AG04449 (cell line): ENCODE measurements at regions of chr10 and their contacts with region 1.

Region 1: DNA sequence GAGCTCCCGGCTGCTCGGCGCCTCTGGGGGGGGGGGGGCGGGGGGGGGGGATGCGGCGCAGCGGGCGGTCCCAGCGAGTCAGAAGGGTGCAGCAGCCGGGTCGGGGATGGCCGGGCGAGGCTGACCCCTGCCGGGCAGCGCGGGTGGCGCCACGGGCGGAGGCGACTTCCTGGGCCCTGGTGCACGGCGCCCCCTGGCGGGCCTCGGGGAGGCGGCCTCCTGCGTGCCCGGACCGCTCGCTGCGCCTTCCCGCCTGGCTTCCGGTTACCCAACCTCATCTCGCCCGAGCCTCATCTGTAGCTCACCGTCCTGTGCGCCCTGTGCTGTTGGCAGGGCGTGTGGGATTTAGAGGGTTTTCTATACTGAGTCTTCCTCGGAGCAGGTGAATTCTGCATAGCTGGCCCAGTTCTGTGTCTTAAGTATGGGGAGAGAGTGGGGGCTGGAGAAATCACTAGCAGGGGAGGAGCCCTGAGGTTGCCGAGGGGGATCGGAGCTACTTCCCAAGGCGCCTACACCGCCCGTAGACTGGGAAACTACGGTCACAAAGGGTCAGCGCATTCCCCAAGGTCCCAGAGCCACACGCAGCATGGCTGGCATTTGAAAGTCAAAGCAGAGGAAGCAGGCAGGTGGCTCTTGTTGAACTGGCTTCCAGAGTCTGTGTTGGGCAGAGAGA is 28.3 kb upstream of the WDFY4 start:
- DNase-seq: no peak
- H3K4me3 ChIP-seq: peak overlapping the region; percentile 62
- CTCF ChIP-seq: peak; percentile 100

Region 2: DNA sequence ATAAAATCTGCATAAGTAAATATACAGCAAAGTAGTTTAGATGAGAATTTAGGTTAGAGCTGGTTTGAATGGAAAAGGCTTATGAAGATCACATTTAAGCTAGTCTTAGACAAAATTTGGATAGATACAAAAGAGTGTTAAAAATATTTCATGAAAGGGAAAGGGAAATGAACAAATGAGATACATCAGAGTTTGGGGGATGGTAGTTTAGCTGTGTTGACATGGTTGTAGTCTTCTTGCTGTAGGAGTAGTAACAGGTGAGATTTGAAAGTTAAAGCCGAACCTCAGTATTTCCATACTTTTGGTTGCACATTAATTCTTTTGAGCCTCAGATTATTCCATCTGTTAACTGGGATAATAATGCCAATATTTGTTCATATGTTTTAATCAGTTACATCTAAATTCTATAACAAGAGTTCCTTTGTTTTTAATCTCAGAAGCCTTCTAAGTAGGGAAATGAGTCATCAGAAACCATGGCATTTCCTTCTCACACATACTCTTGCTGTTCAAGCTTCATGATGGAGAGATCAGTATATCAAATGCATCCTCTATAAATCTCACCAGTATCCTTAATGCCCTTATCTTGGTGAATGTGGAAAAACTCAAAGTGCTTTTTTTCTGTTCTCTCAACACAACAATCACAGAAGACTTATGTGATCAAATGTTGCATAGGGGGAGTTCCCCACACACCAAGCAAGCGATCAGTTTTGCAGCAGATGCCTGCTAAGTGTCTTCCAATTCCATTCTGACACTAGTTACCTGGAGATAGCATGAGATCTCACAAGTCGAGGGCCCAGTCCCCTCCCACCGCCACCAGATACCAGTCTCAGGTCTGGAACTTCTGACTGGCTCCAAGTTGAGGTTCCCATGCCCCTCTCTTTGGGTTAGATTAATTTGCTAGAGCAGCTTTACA is 265.2 kb before region 1 on chr10:
- CTCF ChIA-PET with region 1: interaction called, 10 read pairs
- POLR2A ChIA-PET with region 1: no interaction called
- DNase-seq: no peak
- H3K4me3 ChIP-seq: no peak overlapping the region
- CTCF ChIP-seq: no peak

Region 3: DNA sequence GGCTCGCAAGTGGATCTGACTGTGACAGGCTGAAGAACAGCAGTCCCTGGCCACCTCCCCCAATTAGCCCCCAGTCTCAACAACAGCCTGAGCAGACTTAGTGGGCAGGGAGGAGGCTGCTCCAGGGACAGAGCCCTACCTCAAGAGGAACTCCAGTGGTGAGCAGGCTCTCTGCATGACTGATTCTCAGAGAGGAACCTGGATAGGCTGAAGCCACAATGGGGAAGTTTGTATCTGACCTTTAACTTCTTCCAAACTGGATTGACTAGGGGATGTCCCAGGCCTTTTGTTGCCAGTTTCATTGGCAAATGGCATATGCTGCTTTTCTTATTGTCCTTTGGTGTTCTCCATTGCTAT is 144.5 kb before region 1 on chr10:
- CTCF ChIA-PET with region 1: interaction called, 29 read pairs
- POLR2A ChIA-PET with region 1: no interaction called
- DNase-seq: no peak
- H3K4me3 ChIP-seq: no peak overlapping the region
- CTCF ChIP-seq: no peak

Region 4: GRCh38 chr10:48577158-48577557 is 79.2 kb before region 1 on chr10:
- CTCF ChIA-PET with region 1: interaction called, 69 read pairs
- POLR2A ChIA-PET with region 1: no interaction called
- DNase-seq: no peak
- H3K4me3 ChIP-seq: no peak overlapping the region
- CTCF ChIP-seq: no peak

Region 5: DNA sequence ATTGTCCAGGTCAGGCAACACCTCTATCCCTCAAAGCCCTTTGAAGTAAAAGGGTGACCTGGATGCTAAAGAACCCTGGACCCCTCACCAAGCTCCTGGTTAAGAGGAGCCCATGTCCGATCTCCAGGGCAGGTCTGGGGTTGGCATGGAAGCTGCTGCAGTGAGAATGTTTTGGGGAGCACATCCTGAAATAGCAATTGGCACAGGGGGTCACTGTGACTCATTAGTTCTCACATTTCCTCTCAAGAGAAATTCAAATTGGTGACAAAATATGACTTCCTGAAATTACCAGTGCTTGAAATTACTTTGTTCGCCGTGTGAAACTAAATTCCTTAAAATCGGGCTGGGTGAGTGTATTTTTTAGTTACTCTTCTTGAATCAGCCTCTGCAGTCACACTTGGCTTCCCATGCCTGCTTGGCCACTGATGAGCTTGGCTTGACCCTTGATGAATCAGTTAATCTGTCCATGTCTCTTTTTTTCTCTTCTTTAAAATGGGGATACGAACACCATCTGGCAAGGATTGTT is 32.7 kb before region 1 on chr10:
- CTCF ChIA-PET with region 1: interaction called, 132 read pairs
- POLR2A ChIA-PET with region 1: no interaction called
- DNase-seq: no peak
- H3K4me3 ChIP-seq: no peak overlapping the region
- CTCF ChIP-seq: no peak

Region 6: GRCh38 chr10:49131507-49132361 is 475.4 kb after region 1 on chr10:
- CTCF ChIA-PET with region 1: no interaction called
- POLR2A ChIA-PET with region 1: no interaction called
- DNase-seq: no peak
- H3K4me3 ChIP-seq: no peak overlapping the region
- CTCF ChIP-seq: no peak

Region 7: GRCh38 chr10:49478819-49479218 is 822.4 kb after region 1 on chr10:
- CTCF ChIA-PET with region 1: interaction called, 10 read pairs
- POLR2A ChIA-PET with region 1: no interaction called
- DNase-seq: no peak
- H3K4me3 ChIP-seq: no peak overlapping the region
- CTCF ChIP-seq: no peak